ENCODE measurements at regions of chr3 and their contacts with region 1.

Region 1: DNA sequence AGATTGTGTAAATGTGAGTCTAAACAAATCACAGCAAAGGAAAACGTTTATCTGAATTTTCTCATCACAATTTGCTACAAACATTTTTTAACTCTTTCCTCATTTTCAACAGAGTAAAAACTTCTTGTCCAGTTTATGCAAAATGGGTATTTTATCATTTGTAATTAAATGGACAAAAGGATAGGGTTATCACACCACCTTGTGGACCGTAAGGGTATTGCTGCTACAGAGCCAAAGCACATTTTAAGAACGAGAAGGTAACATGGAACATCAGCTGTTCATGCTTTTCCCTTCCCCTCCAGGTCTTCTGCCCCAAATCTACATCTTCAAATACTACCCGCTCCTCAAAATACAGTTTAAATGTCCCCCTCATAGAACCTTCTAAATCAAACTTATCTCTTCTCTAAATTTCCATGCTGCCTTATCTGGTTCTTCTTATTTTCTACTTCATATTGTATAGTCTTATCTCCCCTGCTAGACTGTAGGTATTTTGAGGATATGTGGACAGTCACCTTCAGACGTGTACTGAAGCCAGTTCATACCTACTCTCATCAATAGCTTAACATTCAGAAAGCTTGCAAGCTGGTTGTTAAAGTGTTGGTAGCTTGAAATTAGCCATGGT is 12.8 kb upstream of the SETMAR start:
- DNase-seq: peak in 1 of 2 donors; percentile 75
- H3K4me3 ChIP-seq: no peak overlapping the region
- H3K27ac ChIP-seq: no peak overlapping the region
- H3K4me1 ChIP-seq: no peaks in the 10 kb centered on the region
- H3K27me3 ChIP-seq: no peaks in the 10 kb centered on the region
- CTCF ChIP-seq: peak in 5 of 7 experiments; percentile 90 to 96 (median 92)
- EP300 ChIP-seq: no peak
- POLR2A ChIP-seq: no peak

Region 2: DNA sequence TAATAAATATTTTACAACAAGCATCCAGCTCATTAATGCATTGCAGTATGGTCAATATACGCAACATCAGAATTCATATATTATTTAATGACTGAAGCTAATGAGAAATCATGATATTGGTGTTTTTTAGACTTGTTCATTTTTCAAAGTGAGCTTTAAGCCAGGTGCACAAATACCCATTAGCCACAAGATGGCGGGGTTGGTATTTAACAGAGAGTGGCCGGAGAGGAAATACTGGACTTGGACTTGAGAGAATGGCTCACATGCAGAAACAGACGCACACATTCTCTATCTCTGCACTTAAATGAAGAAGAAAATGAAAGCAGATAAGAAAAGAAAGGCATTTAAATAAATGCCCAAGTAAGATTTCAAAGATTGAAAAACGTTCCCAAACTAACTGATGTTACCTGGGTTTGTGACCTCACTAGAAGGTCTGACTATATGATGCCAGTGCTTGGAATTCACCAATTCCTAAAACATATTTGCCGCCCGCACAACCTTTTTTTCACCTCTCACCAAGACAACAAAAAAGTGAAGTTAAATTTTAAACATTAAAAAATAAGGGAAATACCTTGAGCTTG is 1089.7 kb before region 1 on chr3:
- intact Hi-C with region 1: loop called (anchors 5 kb)
- DNase-seq: peak; percentile 41 to 89
- H3K4me3 ChIP-seq: no peak overlapping the region
- H3K27ac ChIP-seq: no peak overlapping the region
- H3K4me1 ChIP-seq: no peaks in the 10 kb centered on the region
- H3K27me3 ChIP-seq: no peaks in the 10 kb centered on the region
- CTCF ChIP-seq: peak in 5 of 7 experiments; percentile 39 to 78 (median 64)
- EP300 ChIP-seq: no peak
- POLR2A ChIP-seq: no peak

Region 3: DNA sequence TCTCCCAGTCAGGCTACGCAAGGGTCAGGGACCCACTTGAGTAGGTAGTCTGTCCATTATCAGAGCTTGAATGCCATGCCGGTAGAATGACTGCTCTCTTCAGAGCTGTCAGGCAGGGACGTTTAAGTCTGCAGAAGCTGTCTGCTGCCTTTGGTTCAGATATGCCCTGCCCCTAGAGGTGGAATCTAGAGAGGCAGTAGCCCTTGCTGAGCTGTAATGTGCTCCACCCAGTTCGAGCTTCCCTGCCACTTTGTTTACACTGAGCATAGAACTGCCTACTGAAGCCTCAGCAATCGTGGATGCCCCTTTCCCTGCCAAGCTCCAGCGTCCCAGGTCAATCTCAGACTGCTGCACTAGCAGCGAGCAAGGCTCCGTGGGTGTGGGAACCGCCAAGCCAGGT is 44.7 kb before region 1 on chr3:
- intact Hi-C with region 1: no loop called
- DNase-seq: no peak
- H3K4me3 ChIP-seq: no peak overlapping the region
- H3K27ac ChIP-seq: no peak overlapping the region
- H3K4me1 ChIP-seq: no peaks in the 10 kb centered on the region
- H3K27me3 ChIP-seq: no peaks in the 10 kb centered on the region
- CTCF ChIP-seq: no peak
- EP300 ChIP-seq: no peak
- POLR2A ChIP-seq: no peak

Region 4: GRCh38 chr3:4340411-4341335 is 50.3 kb after region 1 on chr3:
- intact Hi-C with region 1: no loop called
- DNase-seq: peak in 1 of 2 donors; percentile 32
- H3K4me3 ChIP-seq: no peak overlapping the region
- H3K27ac ChIP-seq: peak overlapping the region in 2 of 5 donors; percentile 5 to 19
- H3K4me1 ChIP-seq: peaks cover 0 to 10% (median 4%) of the 10 kb centered on the region in 4 donors
- H3K27me3 ChIP-seq: no peaks in the 10 kb centered on the region
- CTCF ChIP-seq: no peak
- EP300 ChIP-seq: no peak
- POLR2A ChIP-seq: no peak

Region 5: DNA sequence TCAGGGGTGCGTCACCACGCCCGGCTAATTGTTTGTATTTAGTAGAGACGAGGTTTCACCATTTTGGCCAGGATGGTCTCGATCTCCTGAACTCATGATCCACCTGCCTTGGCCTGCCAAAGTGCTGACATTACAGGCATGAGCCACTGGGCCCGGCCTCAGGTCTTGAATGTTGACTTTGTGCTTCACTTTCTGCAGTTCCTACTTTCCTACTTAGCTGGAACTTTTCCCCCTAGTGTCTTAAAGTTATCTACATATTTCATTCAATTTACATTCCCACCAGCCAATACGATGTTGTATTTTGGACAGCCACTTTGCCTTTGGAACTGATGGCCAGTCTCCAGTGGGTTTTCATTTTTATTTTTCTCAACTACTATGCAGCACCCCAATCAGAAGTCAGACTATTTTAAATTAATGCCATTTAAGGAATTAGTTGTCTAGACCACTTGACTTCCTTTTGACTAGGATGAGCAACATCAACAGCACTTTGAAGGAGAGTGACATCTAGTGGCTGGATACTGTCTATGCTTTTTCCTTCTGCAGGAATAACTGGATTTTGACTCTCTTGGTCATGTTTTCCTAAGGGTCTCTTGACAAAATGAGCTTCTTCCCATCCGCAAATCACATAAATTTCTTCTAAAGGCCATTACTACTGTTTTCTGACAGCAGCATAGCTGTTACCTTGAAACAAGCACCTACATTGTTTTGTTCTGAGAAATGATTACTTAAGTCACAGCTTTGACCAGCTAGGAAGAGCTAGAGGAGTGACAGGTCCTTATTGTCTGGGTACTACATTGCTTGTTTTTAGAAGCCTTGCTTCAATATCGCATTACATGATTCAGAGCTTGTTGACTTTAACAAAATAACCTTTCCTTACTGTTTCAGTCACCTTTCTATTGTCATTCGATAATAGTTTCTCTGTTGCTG is 343.0 kb after region 1 on chr3:
- intact Hi-C with region 1: no loop called
- DNase-seq: peak in 1 of 2 donors; percentile 82
- H3K4me3 ChIP-seq: no peak overlapping the region
- H3K27ac ChIP-seq: no peak overlapping the region
- H3K4me1 ChIP-seq: peaks cover 0 to 8% (median 0%) of the 10 kb centered on the region in 4 donors
- H3K27me3 ChIP-seq: no peaks in the 10 kb centered on the region
- CTCF ChIP-seq: peak in 5 of 7 experiments; percentile 65 to 84 (median 79)
- EP300 ChIP-seq: no peak
- POLR2A ChIP-seq: no peak